T-cell (primary cell): ENCODE measurements at regions of chr9 and their contacts with region 1.

Region 1: GRCh38 chr9:5593904-5594303 is 35.0 kb upstream of the RIC1 start:
- DNase-seq: no peak
- ATAC-seq: no peak
- H3K4me3 ChIP-seq: no peak overlapping the region
- H3K4me3 Mint-ChIP-seq: no peak overlapping the region
- H3K27ac ChIP-seq: no peak overlapping the region
- H3K27ac Mint-ChIP-seq: no peak overlapping the region
- H3K4me1 ChIP-seq: no peaks in the 10 kb centered on the region
- H3K4me1 Mint-ChIP-seq: peaks cover 5 to 19% (median 13%) of the 10 kb centered on the region in 3 donors
- H3K27me3 ChIP-seq: no peaks in the 10 kb centered on the region
- H3K27me3 Mint-ChIP-seq: no peaks in the 10 kb centered on the region

Region 2: DNA sequence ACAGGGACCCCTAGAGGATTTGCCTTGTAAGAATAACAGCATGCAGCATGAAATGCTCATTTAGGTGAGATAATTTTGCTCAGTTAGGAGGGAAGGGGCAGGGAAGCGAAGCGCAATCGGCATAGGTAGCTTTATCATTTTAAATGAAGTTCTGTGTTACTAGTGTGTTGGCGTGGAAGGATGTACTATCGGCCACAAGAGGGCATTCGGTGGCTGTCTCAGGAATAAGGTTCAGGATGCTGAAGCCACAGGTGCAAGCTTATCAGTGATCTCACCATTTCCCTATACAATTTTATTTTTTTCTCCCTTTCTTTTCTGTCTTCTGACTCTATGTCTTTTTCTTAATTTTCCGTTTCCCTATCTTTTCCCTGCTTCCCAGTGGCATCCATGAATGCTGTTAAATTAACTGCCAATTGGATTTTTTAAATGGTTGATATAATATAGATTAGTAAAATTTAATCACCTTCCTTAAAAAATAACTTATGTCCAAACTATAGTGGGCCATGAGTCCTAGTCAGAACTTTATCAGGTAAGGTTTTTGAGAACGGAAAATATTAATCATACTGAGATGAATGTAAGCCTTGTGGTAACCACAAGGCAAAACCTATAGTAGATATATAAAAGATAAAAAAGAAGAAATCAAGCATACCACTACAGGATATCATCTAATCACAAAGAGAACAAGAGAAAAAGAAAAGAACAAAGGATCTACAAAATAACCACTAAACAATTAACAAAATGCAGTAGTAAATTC is 407.3 kb before region 1 on chr9:
- CTCF ChIA-PET with region 1: interaction called, 6 to 47 read pairs
- POLR2A ChIA-PET with region 1: interaction called in 1 of 2 experiments, 3 read pairs
- DNase-seq: peak; percentile 10 to 83 (median 53)
- ATAC-seq: peak; percentile 84 to 95 (median 88)
- H3K4me3 ChIP-seq: no peak overlapping the region
- H3K4me3 Mint-ChIP-seq: no peak overlapping the region
- H3K27ac ChIP-seq: no peak overlapping the region
- H3K27ac Mint-ChIP-seq: no peak overlapping the region
- H3K4me1 ChIP-seq: no peaks in the 10 kb centered on the region
- H3K4me1 Mint-ChIP-seq: peaks cover 6 to 14% (median 10%) of the 10 kb centered on the region in 3 donors
- H3K27me3 ChIP-seq: no peaks in the 10 kb centered on the region
- H3K27me3 Mint-ChIP-seq: peaks cover 0 to 3% of the 10 kb centered on the region in 2 donors

Region 3: GRCh38 chr9:5388026-5388819 is 205.7 kb before region 1 on chr9:
- CTCF ChIA-PET with region 1: no interaction called
- POLR2A ChIA-PET with region 1: no interaction called
- DNase-seq: no peak
- ATAC-seq: no peak
- H3K4me3 ChIP-seq: no peak overlapping the region
- H3K4me3 Mint-ChIP-seq: no peak overlapping the region
- H3K27ac ChIP-seq: no peak overlapping the region
- H3K27ac Mint-ChIP-seq: no peak overlapping the region
- H3K4me1 ChIP-seq: no peaks in the 10 kb centered on the region
- H3K4me1 Mint-ChIP-seq: peaks cover 15 to 23% (median 21%) of the 10 kb centered on the region in 3 donors
- H3K27me3 ChIP-seq: no peaks in the 10 kb centered on the region
- H3K27me3 Mint-ChIP-seq: no peaks in the 10 kb centered on the region

Region 4: DNA sequence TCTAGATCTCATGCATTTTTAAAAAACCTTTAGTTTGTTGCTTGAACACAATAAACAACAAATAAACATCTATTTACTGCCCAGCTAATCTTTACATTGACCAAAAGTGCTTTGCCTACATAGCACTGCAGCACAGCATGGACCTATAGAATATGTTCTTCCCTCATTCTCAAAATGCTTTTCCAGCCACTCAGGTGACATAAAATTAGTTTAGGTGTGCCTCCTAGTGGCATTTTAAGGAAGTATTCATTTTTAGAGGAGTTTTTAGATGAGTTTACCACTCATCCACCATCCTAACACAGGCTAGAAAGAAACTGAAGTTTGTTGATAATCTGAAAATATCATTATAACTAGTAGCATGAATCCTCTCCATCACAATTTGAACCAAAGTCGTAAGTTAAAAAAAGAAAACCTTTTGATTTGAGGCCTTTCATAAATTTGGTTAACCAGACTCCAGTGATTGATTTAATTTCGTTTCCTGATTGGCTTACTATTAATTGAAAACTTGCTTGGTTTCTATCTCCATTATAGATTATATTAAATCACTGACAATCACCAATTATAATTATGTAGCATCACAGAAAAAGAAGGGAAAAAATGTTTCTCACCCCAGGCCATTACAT is 168.8 kb before region 1 on chr9:
- CTCF ChIA-PET with region 1: interaction called, 3 to 18 read pairs
- POLR2A ChIA-PET with region 1: no interaction called
- DNase-seq: peak in 1 of 35 experiments; percentile 66
- ATAC-seq: peak; percentile 50 to 64 (median 56)
- H3K4me3 ChIP-seq: no peak overlapping the region
- H3K4me3 Mint-ChIP-seq: no peak overlapping the region
- H3K27ac ChIP-seq: no peak overlapping the region
- H3K27ac Mint-ChIP-seq: no peak overlapping the region
- H3K4me1 ChIP-seq: no peaks in the 10 kb centered on the region
- H3K4me1 Mint-ChIP-seq: peaks cover 0 to 6% (median 5%) of the 10 kb centered on the region in 3 donors
- H3K27me3 ChIP-seq: no peaks in the 10 kb centered on the region
- H3K27me3 Mint-ChIP-seq: no peaks in the 10 kb centered on the region

Region 5: DNA sequence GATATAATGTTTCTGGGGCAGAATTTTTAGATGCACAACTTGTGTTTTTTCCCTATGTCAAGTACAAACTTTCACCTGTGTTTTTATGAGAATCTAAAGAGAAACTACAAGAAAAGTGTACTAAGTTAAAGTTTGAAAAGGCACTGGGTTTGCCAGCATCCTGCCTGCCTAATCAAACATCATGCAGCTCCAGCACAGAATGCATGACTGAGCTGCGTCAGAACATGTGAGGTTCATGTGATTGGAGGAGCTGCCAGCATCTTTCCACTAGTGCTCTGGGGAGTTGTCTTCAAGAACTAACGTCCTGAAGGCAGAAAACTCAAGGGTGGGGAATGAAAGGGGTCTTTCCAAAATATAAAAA is 11.1 kb before region 1 on chr9:
- CTCF ChIA-PET with region 1: interaction called in 1 of 2 experiments, 21 read pairs
- POLR2A ChIA-PET with region 1: no interaction called
- DNase-seq: peak in 32 of 35 experiments; percentile 10 to 75 (median 44)
- ATAC-seq: peak; percentile 73 to 89 (median 78)
- H3K4me3 ChIP-seq: no peak overlapping the region
- H3K4me3 Mint-ChIP-seq: peak overlapping the region in 1 of 3 donors; percentile 6
- H3K27ac ChIP-seq: peak overlapping the region; percentile 19
- H3K27ac Mint-ChIP-seq: peak overlapping the region; percentile 77 to 79
- H3K4me1 ChIP-seq: peaks cover 21 to 26% of the 10 kb centered on the region in 2 experiments
- H3K4me1 Mint-ChIP-seq: peaks cover 51 to 69% (median 66%) of the 10 kb centered on the region in 3 donors
- H3K27me3 ChIP-seq: no peaks in the 10 kb centered on the region
- H3K27me3 Mint-ChIP-seq: no peaks in the 10 kb centered on the region